ENCODE measurements at regions of chr5 and their contacts with region 1.

Region 1: GRCh38 chr5:134586866-134587524 is 45.6 kb downstream of the SAR1B start:
- DNase-seq: peak; percentile 73
- H3K4me3 ChIP-seq: no peak overlapping the region
- H3K27ac ChIP-seq: no peak overlapping the region
- H3K4me1 ChIP-seq: peaks cover 10% of the 10 kb centered on the region
- H3K27me3 ChIP-seq: no peaks in the 10 kb centered on the region
- CTCF ChIP-seq: peak; percentile 78 to 81

Region 2: GRCh38 chr5:134176511-134177368 is 410.3 kb before region 1 on chr5 and contains the start of gene SKP1:
- CTCF ChIA-PET with region 1: no interaction called
- dilution Hi-C with region 1: no loop called
- in situ Hi-C with region 1: loop called (anchors 25 kb)
- intact Hi-C with region 1: no loop called
- DNase-seq: peak; percentile 84
- H3K4me3 ChIP-seq: peak within 1 kb of the TSS; percentile 56 to 95 (median 93)
- H3K27ac ChIP-seq: peak within 1 kb of the TSS; percentile 84
- H3K4me1 ChIP-seq: peaks cover 15% of the 10 kb centered on the region
- H3K27me3 ChIP-seq: no peaks in the 10 kb centered on the region
- CTCF ChIP-seq: no peak
- total RNA-seq, gene SKP1: 146 to 231 TPM

Region 3: DNA sequence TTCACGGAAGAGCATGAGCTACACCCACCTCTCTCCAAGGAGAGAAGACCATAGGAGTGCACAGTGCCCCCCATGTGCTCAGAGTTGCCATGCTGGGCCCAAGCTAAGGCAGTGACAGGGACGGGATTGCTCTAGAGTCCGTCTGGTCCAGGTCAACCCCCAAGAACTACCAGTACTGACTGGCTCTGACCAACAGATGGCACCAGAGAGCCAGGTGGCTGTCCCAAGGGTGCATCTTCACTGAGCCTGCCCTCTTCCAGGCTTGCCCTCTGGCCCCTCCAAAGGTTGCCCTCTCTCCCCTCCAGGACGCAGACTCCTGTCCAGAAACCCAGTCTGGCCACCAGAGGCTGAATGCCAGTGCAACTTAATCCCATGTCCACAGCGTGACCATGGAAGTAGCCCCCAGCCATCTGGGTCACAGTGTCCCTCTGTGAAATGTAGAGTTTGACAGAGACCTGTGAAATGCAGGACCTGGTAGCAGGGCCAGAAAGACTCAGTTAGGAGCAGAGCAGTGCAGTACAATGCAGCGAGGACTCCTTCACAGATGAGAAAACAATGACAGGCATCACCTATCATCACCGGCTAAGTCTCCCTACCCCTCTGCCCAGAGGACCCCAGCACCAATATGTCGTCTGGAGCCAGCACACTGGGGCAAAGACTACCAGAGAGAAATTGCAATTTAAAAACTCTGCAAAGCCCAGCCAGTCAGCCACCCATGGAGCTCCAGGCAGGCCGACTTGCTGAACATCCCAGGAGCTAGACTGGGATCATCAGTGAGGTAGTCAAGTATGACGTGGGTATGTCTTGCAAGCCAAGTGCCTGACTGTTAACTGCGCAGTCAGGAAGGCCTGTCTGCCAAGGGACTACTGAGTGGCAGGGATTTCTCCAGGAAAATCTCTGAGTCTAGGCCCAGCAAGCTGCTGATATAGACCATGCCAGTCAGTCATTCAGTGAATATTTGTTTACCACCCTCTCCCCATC is 402.6 kb before region 1 on chr5:
- CTCF ChIA-PET with region 1: no interaction called
- dilution Hi-C with region 1: no loop called
- in situ Hi-C with region 1: loop called (anchors 25 kb)
- intact Hi-C with region 1: loop called (anchors 2 kb)
- DNase-seq: peak; percentile 42
- H3K4me3 ChIP-seq: no peak overlapping the region
- H3K27ac ChIP-seq: no peak overlapping the region
- H3K4me1 ChIP-seq: no peaks in the 10 kb centered on the region
- H3K27me3 ChIP-seq: no peaks in the 10 kb centered on the region
- CTCF ChIP-seq: peak; percentile 88 to 97

Region 4: GRCh38 chr5:134304311-134304710 is 282.7 kb before region 1 on chr5:
- CTCF ChIA-PET with region 1: interaction called, 14 read pairs
- dilution Hi-C with region 1: no loop called
- in situ Hi-C with region 1: no loop called
- intact Hi-C with region 1: loop called (anchors 1 kb)
- DNase-seq: no peak
- H3K4me3 ChIP-seq: no peak overlapping the region
- H3K27ac ChIP-seq: no peak overlapping the region
- H3K4me1 ChIP-seq: no peaks in the 10 kb centered on the region
- H3K27me3 ChIP-seq: no peaks in the 10 kb centered on the region
- CTCF ChIP-seq: no peak

Region 5: DNA sequence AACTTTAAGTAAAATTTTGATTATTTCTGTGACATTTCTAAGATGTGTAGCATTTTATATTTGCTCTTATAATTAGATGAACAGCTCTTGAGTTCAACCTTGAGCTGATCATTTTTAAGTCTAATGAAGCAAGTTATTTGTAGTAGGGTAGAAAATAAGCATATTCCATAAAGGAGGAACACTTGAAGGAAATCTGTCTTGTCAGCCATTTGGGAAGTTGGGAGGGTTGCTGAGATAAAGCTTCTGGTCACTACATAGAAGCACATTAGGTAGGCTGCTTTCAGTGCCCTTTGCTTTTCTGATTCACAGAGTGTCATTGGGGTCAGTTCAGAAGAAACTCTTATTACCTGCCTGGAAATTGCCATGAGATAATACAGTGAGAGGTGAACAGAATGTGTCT is 105.7 kb after region 1 on chr5:
- CTCF ChIA-PET with region 1: no interaction called
- dilution Hi-C with region 1: no loop called
- in situ Hi-C with region 1: no loop called
- intact Hi-C with region 1: no loop called
- DNase-seq: no peak
- H3K4me3 ChIP-seq: no peak overlapping the region
- H3K27ac ChIP-seq: no peak overlapping the region
- H3K4me1 ChIP-seq: peaks cover 13% of the 10 kb centered on the region
- H3K27me3 ChIP-seq: no peaks in the 10 kb centered on the region
- CTCF ChIP-seq: no peak

Measured in mammary epithelial cell (primary cell).